ENCODE measurements at regions of chr17 and their contacts with region 1.

Region 1: GRCh38 chr17:50719144-50719923 is at the start of gene LUC7L3:
- DNase-seq: peak; percentile 95
- H3K4me3 Mint-ChIP-seq: peak within 1 kb of the TSS; percentile 88
- H3K27ac Mint-ChIP-seq: peak within 1 kb of the TSS; percentile 98
- H3K4me1 Mint-ChIP-seq: peaks cover 28% of the 10 kb centered on the region
- H3K27me3 Mint-ChIP-seq: no peaks in the 10 kb centered on the region
- total RNA-seq, gene LUC7L3: 118 and 123 TPM in 2 replicates

Region 2: DNA sequence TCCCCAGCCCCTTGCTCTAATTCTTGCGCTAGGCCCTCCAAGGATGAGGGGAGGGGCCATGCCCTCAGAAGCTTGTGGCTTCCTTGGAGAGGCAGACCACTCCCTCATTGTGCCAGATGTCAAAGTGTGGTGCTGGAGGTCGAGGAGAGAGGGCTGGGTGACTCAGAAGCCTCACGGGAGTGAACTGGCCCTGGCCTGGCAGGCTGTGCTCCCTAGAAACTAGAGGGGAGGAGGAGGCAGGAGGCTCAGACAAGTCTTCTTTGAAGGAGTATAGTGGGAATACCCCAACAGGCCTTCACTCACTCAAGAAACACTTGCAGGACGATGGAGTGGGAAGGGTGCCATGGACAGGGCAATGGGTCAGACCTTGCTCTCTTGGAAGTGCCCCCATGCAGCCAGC is 30.1 kb before region 1 on chr17:
- intact Hi-C with region 1: no loop called
- DNase-seq: no peak
- H3K4me3 Mint-ChIP-seq: no peak overlapping the region
- H3K27ac Mint-ChIP-seq: no peak overlapping the region
- H3K4me1 Mint-ChIP-seq: no peaks in the 10 kb centered on the region
- H3K27me3 Mint-ChIP-seq: no peaks in the 10 kb centered on the region

Region 3: GRCh38 chr17:50707289-50708049 is 11.9 kb before region 1 on chr17 and contains the start of gene ANKRD40:
- intact Hi-C with region 1: loop called (anchors 1 kb)
- DNase-seq: peak; percentile 90
- H3K4me3 Mint-ChIP-seq: peak within 1 kb of the TSS; percentile 95
- H3K27ac Mint-ChIP-seq: peak within 1 kb of the TSS; percentile 97
- H3K4me1 Mint-ChIP-seq: peaks cover 40% of the 10 kb centered on the region
- H3K27me3 Mint-ChIP-seq: peaks cover 3% of the 10 kb centered on the region
- total RNA-seq, gene ANKRD40: 47.0 and 50.3 TPM in 2 replicates